ENCODE measurements at regions of chr14 and their contacts with region 1.

Region 1: GRCh38 chr14:59150990-59151389 is 37.5 kb upstream of the DAAM1 start:
- DNase-seq: no peak
- H3K4me3 ChIP-seq: no peak overlapping the region
- H3K27ac ChIP-seq: no peak overlapping the region
- H3K4me1 ChIP-seq: no peaks in the 10 kb centered on the region
- H3K27me3 ChIP-seq: no peaks in the 10 kb centered on the region
- CTCF ChIP-seq: no peak
- POLR2A ChIP-seq: no peak

Region 2: GRCh38 chr14:57352396-57353170 is 1798.4 kb before region 1 on chr14:
- intact Hi-C with region 1: loop called (anchors 10 kb)
- DNase-seq: no peak
- H3K4me3 ChIP-seq: no peak overlapping the region
- H3K27ac ChIP-seq: no peak overlapping the region
- H3K4me1 ChIP-seq: no peaks in the 10 kb centered on the region
- H3K27me3 ChIP-seq: no peaks in the 10 kb centered on the region
- CTCF ChIP-seq: no peak
- POLR2A ChIP-seq: no peak

Region 3: DNA sequence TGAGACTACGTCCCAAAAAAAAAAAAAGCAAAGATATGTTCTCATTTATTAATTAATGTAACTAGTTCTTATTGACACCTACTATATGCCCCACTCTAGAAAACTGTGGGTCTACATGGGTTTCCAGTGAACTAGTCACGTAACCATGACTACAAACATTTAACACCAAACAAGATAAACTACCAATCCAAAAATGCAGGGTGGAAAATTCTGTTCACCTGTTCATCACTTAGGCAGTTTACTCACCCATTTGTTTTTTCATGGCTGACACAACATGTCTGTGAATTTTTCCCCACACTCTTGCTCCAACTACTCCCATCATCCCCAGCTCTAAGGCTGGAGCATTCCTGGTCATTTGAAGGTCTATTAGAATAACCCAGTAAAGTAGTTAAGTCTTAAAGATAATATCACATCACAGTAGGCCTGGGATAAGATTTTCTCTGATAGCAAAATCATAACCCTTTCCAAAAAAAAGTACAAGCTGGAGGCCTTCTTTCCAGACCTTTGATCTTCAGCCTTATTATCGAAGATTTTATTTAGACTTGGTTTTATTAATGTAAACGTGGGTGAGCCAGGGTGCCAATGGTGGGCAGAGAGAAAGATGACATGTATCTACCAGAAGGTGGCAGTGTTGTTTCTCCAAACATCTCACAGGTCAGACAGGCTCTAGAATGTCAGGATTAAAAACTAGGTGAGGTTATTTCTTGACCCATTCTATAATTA is 24.1 kb before region 1 on chr14:
- intact Hi-C with region 1: no loop called
- DNase-seq: peak in 1 of 2 donors; percentile 22
- H3K4me3 ChIP-seq: no peak overlapping the region
- H3K27ac ChIP-seq: no peak overlapping the region
- H3K4me1 ChIP-seq: no peaks in the 10 kb centered on the region
- H3K27me3 ChIP-seq: no peaks in the 10 kb centered on the region
- CTCF ChIP-seq: peak; percentile 57 to 86 (median 78)
- POLR2A ChIP-seq: no peak